HEK293 (cell line): ENCODE measurements at regions of chr3 and their contacts with region 1.

Region 1: GRCh38 chr3:52339612-52340011 is 23.5 kb downstream of the DNAH1 start:
- H3K4me3 ChIP-seq: no peak overlapping the region
- H3K27ac ChIP-seq: no peak overlapping the region
- H3K4me1 ChIP-seq: no peaks in the 10 kb centered on the region
- CTCF ChIP-seq: peak; percentile 69; the same call in 1 of the 2 replicates

Region 2: DNA sequence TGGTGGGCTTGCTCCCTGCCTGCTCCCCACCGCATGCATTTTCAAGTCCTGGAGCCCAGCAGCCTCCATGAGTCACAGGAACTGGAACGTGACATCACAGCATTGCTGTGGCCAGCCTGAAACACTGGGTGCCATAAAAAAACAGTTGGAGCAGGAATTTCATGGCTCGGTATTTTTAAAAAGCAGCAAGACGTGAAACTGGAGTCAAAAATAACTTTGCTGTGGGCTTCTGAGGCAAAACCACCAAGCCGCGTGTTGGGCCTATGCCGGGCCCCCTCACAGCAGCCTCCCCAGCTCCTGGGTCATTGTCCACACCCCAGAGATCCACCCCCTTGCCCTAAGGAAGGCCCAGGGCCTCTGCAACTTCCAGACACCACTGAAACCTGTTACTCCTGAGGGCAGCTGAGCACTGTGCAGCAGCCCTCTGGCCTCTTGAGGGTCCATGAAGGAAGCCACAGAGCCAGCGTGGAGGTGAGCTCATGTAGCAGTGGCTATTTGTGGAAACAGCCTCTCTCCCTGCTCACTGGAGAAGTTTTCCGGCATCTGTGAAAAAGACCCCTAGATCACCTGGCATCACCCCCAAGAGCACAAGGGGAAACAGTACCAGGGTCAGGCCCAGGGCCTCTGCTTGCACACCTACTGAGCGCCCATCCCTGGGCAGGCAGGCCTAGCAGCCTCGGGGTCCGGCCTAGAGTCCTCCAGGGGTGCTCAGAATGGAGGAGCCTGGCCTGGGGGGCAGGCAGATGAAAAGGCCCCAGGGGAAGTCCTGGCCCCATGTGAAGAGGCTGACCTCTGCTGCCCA is 249.3 kb before region 1 on chr3:
- CTCF ChIA-PET with region 1: no interaction called
- POLR2A ChIA-PET with region 1: no interaction called
- H3K4me3 ChIP-seq: no peak overlapping the region
- H3K27ac ChIP-seq: no peak overlapping the region
- H3K4me1 ChIP-seq: no peaks in the 10 kb centered on the region
- CTCF ChIP-seq: no peak

Region 3: GRCh38 chr3:52231502-52232293 is 107.9 kb before region 1 on chr3:
- CTCF ChIA-PET with region 1: interaction called, 44 read pairs
- POLR2A ChIA-PET with region 1: interaction called, 3 read pairs
- H3K4me3 ChIP-seq: no peak overlapping the region
- H3K27ac ChIP-seq: no peak overlapping the region
- H3K4me1 ChIP-seq: no peaks in the 10 kb centered on the region
- CTCF ChIP-seq: peak; percentile 87

Region 4: DNA sequence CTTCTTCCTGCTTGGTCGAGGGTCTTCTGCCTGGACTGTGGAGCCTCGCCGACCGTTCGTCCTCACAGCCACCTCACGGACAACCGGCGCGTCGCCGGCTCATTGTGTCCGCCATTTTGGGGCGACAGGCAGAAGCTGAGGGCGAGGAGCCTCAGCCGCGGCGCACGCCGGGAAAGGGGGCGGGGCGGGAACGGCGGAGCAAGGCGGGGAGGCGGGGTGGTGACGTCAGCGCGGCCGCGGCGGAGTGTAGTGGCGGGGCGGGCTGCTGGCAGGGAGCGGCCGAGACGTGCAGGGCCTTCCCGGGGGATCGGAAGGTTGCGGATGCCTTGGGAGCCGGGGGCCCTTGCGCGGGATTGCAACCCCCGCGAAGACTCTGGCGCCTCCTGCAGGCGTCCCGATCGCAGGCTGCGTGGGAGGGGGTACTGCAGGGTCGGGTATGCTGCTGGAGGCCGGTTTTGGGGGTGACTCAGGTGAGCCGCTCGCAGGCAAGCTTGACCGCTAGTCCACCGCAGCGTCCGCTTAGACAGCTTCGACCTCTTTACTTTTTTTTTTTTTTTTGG is 61.0 kb before region 1 on chr3 and contains the start of gene WDR82:
- CTCF ChIA-PET with region 1: interaction called, 11 read pairs
- POLR2A ChIA-PET with region 1: interaction called, 3 read pairs
- H3K4me3 ChIP-seq: peak within 1 kb of the TSS; percentile 82
- H3K27ac ChIP-seq: peak within 1 kb of the TSS; percentile 95
- H3K4me1 ChIP-seq: no peaks in the 10 kb centered on the region
- CTCF ChIP-seq: peak; percentile 75

Region 5: GRCh38 chr3:52299879-52300611 is 39.6 kb before region 1 on chr3:
- CTCF ChIA-PET with region 1: interaction called, 14 read pairs
- POLR2A ChIA-PET with region 1: interaction called, 3 read pairs
- H3K4me3 ChIP-seq: no peak overlapping the region
- H3K27ac ChIP-seq: no peak overlapping the region
- H3K4me1 ChIP-seq: no peaks in the 10 kb centered on the region
- CTCF ChIP-seq: 0 out of 2 replicates have a peak, but pooled peaks have one; percentile 29

Region 6: DNA sequence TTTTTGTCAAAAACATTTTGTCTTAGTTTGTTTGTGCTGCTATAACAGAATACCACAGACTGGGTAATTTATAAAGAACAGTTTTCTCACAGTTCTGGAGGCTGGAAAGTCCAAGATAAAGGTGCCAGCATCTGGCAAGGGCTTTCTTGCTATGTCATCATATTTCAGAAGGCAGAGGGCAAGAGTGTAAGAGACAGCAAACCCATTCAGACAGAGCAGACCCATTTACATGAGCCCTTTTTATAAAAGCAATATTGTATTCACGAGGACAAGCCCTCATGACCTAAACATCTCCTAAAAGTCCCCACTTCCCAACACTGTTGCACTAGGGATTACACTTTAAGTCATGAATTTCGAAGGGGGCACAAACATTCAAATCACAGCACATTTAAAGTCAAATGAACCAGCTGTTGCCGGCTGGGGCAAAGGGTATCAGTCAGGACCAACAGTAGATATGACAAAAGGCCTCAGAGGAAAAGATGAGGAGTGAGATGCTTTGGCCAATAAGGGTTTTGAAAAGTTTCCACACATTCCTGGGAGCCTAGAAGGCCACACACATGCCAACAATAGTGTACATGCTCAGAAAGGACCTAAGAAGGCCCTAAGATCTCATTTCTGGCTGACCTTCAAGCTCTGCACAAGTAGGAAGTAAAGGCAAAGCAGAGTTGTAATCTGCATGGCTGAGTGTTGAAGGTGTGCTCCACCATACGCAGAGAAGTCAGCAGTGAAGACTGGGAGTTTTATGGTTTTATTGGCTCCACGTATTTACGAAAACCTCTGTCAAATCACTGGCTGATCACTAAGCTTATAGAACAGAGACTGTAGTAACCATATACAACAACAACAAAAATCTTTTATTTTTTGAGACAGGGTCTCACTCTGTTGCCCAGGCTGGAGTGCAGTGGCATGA is 234.7 kb after region 1 on chr3:
- CTCF ChIA-PET with region 1: no interaction called
- POLR2A ChIA-PET with region 1: no interaction called
- H3K4me3 ChIP-seq: no peak overlapping the region
- H3K27ac ChIP-seq: no peak overlapping the region
- H3K4me1 ChIP-seq: no peaks in the 10 kb centered on the region
- CTCF ChIP-seq: no peak